CD4-positive, alpha-beta memory T cell (primary cell): ENCODE measurements at regions of chr10 and their contacts with region 1.

Region 1: GRCh38 chr10:115417585-115418265 is 324.6 kb downstream of the ATRNL1 start:
- DNase-seq: no peak
- H3K4me3 ChIP-seq: no peak overlapping the region
- H3K4me3 Mint-ChIP-seq: no peak overlapping the region
- H3K27ac ChIP-seq: no peak overlapping the region
- H3K27ac Mint-ChIP-seq: no peak overlapping the region
- H3K4me1 ChIP-seq: no peaks in the 10 kb centered on the region
- H3K4me1 Mint-ChIP-seq: no peaks in the 10 kb centered on the region
- H3K27me3 ChIP-seq: no peaks in the 10 kb centered on the region
- H3K27me3 Mint-ChIP-seq: no peaks in the 10 kb centered on the region

Region 2: GRCh38 chr10:114821293-114821914 is 596.3 kb before region 1 on chr10 and contains the start of gene FHIP2A:
- CTCF ChIA-PET with region 1: no interaction called
- POLR2A ChIA-PET with region 1: no interaction called
- intact Hi-C with region 1: no loop called
- DNase-seq: peak; percentile 71 to 91 (median 86)
- H3K4me3 ChIP-seq: peak within 1 kb of the TSS; percentile 59 to 66
- H3K4me3 Mint-ChIP-seq: peak within 1 kb of the TSS; percentile 91 to 96 (median 94)
- H3K27ac ChIP-seq: peak within 1 kb of the TSS; percentile 73
- H3K27ac Mint-ChIP-seq: peak within 1 kb of the TSS; percentile 92 to 96 (median 95)
- H3K4me1 ChIP-seq: peaks cover 42% of the 10 kb centered on the region
- H3K4me1 Mint-ChIP-seq: peaks cover 26 to 39% (median 33%) of the 10 kb centered on the region in 4 donors
- H3K27me3 ChIP-seq: no peaks in the 10 kb centered on the region
- H3K27me3 Mint-ChIP-seq: no peaks in the 10 kb centered on the region
- total RNA-seq, gene FHIP2A: 25.1 to 32.1 TPM

Region 3: DNA sequence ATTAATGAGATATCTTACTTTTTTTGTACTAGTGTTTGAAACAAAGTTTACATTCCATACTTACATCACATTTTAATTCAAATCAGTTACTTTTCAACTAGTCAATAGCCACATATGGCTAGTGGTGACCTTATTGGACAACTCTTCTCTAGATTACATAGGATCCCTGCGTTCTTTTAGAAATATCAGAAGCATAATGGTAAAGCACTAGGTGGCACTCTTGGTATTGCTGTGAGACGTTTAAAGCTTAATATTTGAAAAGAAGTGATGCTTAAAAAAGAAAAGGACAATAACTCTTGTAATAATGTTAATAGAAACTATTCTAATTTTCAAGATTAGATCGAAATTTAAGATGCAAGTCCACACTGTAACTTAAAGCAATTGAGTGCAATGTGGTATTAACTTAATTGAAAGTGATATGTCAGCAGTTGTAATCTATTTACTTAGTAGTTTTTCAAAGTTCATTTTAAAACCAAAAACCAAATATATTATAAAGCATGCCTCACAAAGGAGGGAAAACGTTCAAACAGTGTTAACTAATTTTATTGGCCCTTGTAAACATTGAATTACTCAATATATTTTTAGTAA is 14.6 kb after region 1 on chr10:
- CTCF ChIA-PET with region 1: no interaction called
- POLR2A ChIA-PET with region 1: no interaction called
- intact Hi-C with region 1: no loop called
- DNase-seq: no peak
- H3K4me3 ChIP-seq: no peak overlapping the region
- H3K4me3 Mint-ChIP-seq: no peak overlapping the region
- H3K27ac ChIP-seq: no peak overlapping the region
- H3K27ac Mint-ChIP-seq: no peak overlapping the region
- H3K4me1 ChIP-seq: no peaks in the 10 kb centered on the region
- H3K4me1 Mint-ChIP-seq: no peaks in the 10 kb centered on the region
- H3K27me3 ChIP-seq: no peaks in the 10 kb centered on the region
- H3K27me3 Mint-ChIP-seq: no peaks in the 10 kb centered on the region

Region 4: DNA sequence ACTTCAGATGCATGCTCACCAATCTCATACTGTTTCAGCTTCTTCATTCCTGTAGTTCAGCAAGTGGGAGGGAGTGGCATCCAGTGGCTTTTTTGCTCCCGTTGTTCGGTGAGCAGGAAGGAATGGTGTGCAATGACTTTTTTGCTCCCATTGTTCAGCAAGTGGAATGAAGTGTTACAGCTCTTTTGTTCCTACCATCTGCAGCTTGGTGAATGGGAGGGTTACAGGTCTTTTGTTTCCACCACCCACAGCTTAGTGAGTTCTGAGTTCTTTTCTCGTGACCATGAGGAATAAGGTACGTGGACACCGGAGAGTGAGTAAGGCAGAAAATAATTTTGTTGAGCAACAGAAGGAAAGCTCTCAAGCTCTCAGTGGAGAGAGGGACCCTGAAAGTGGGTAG is 39.1 kb after region 1 on chr10:
- CTCF ChIA-PET with region 1: no interaction called
- POLR2A ChIA-PET with region 1: no interaction called
- intact Hi-C with region 1: loop called (anchors 5 kb)
- DNase-seq: no peak
- H3K4me3 ChIP-seq: no peak overlapping the region
- H3K4me3 Mint-ChIP-seq: no peak overlapping the region
- H3K27ac ChIP-seq: no peak overlapping the region
- H3K27ac Mint-ChIP-seq: no peak overlapping the region
- H3K4me1 ChIP-seq: no peaks in the 10 kb centered on the region
- H3K4me1 Mint-ChIP-seq: no peaks in the 10 kb centered on the region
- H3K27me3 ChIP-seq: no peaks in the 10 kb centered on the region
- H3K27me3 Mint-ChIP-seq: no peaks in the 10 kb centered on the region